MCF 10A (cell line): ENCODE measurements at regions of chr5 and their contacts with region 1.

Region 1: GRCh38 chr5:172697123-172698121 is 56.4 kb downstream of the NEURL1B start:
- DNase-seq: peak; percentile 94
- H3K4me3 Mint-ChIP-seq: peak overlapping the region; percentile 82
- H3K27ac Mint-ChIP-seq: peak overlapping the region; percentile 82
- H3K4me1 Mint-ChIP-seq: peaks cover 17% of the 10 kb centered on the region
- H3K27me3 Mint-ChIP-seq: peaks cover 14% of the 10 kb centered on the region
- CTCF ChIP-seq: peak; percentile 99

Region 2: DNA sequence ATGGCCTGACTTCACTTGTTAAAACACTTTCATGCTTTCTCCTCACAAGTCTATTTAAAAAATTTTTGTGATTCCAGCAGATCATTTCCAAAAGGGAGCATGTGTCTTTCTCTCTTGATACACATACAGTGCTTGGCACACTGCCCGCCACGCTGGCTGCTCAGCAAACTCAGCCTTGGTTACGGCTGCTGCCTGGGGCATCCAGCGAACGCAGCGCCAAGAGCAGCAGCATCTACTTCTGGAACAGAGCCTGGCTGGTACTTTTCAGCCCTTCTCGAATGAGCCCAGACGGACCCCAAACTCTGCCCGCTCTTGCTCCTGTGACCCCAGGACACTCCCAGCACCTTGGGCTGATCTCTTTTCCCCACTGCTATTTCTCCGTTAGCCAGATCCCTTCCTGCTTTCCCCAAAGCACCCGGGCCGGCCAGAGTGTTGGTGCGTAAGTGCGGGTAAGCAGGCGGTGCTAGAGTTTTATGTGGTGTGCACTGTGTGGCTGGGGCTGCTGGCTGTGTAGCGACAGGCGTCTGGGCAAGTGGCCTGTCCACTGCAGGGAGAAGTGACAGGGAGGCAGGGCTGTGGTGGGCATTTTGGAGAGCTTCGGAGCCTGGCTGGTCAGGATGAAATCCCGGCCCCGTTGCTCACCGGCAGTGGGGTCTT is 316.3 kb before region 1 on chr5:
- CTCF ChIA-PET with region 1: no interaction called
- POLR2A ChIA-PET with region 1: no interaction called
- intact Hi-C with region 1: no loop called
- DNase-seq: no peak
- H3K4me3 Mint-ChIP-seq: no peak overlapping the region
- H3K27ac Mint-ChIP-seq: no peak overlapping the region
- H3K4me1 Mint-ChIP-seq: peaks cover 16% of the 10 kb centered on the region
- H3K27me3 Mint-ChIP-seq: no peaks in the 10 kb centered on the region
- CTCF ChIP-seq: no peak

Region 3: DNA sequence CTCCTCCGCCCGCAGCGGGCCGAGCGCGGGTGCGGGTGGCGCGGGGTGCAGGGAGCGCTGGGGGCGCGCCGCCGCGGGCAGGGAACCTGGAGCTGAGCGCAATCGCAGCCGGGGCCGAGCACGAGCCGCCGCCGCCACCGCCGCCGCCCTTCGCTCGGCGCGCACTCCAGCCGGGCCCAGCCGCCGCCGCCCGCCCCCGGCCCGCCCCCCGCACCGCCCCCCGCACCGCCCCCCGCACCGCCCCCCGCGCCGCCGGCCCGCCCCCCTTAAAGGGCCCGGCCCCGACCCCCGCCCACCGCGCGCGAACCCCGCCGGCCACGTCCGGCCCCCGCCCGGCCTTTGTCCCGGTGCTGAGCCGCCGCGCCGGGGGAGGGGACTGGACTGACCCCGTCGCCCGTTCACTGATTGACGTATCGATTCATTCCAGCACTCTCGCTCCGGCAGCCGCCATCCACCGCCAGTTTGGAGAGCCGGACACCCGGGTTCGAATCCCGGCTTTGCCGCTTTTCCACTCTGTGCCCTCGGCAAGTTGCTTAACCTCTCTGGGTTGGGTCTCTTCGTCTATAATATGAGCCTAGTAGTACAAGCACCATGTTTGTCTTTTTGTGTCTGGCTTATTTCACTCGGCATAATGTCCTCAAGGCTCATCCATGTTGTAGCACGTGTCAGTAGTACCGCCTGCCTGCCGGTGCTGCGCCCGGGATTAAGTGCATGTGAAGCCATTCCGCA is 242.9 kb before region 1 on chr5 and contains the start of gene SH3PXD2B:
- CTCF ChIA-PET with region 1: interaction called, 52 read pairs
- POLR2A ChIA-PET with region 1: interaction called, 4 read pairs
- intact Hi-C with region 1: no loop called
- DNase-seq: peak; percentile 68
- H3K4me3 Mint-ChIP-seq: peak within 1 kb of the TSS; percentile 91
- H3K27ac Mint-ChIP-seq: peak within 1 kb of the TSS; percentile 90
- H3K4me1 Mint-ChIP-seq: peaks cover 44% of the 10 kb centered on the region
- H3K27me3 Mint-ChIP-seq: no peaks in the 10 kb centered on the region
- CTCF ChIP-seq: no peak
- total RNA-seq, gene SH3PXD2B: 34.1 and 42.3 TPM in 2 replicates

Region 4: GRCh38 chr5:172503925-172504700 is 193.3 kb before region 1 on chr5:
- CTCF ChIA-PET with region 1: interaction called, 17 read pairs
- POLR2A ChIA-PET with region 1: no interaction called
- intact Hi-C with region 1: no loop called
- DNase-seq: peak; percentile 53
- H3K4me3 Mint-ChIP-seq: peak overlapping the region; percentile 9
- H3K27ac Mint-ChIP-seq: peak overlapping the region; percentile 77
- H3K4me1 Mint-ChIP-seq: peaks cover 23% of the 10 kb centered on the region
- H3K27me3 Mint-ChIP-seq: no peaks in the 10 kb centered on the region
- CTCF ChIP-seq: no peak

Region 5: DNA sequence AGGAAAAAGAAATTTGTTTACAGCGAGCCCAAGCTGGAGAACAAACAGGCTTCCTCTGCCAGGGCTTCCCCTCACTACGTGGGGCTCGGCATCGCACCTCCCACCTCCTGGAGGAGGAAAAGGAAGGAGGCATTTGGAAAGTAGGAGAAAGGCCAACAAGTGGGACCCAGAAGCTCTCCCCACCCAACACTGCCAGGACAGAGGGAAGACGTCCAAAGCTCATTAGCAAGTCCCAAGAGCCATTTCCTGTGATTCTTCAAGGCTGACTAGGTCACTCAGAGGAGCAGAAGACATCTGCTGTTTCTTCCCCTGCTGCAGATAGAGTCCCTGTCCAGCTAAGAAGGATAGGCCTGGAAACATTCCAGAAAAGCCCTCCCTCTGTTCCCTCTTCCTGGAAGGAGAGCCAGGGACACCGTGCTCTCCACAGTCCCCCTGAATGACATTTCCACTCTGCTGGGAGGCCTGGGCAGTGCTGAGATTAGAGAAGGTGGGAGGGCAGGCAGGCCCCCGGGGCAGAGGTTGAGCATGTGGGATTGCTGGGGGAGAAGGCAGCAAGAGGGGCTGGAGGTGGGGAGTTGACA is 113.4 kb before region 1 on chr5:
- CTCF ChIA-PET with region 1: interaction called, 9 read pairs
- POLR2A ChIA-PET with region 1: no interaction called
- intact Hi-C with region 1: loop called (anchors 1 kb)
- DNase-seq: no peak
- H3K4me3 Mint-ChIP-seq: no peak overlapping the region
- H3K27ac Mint-ChIP-seq: no peak overlapping the region
- H3K4me1 Mint-ChIP-seq: no peaks in the 10 kb centered on the region
- H3K27me3 Mint-ChIP-seq: peaks cover 65% of the 10 kb centered on the region
- CTCF ChIP-seq: no peak

Region 6: DNA sequence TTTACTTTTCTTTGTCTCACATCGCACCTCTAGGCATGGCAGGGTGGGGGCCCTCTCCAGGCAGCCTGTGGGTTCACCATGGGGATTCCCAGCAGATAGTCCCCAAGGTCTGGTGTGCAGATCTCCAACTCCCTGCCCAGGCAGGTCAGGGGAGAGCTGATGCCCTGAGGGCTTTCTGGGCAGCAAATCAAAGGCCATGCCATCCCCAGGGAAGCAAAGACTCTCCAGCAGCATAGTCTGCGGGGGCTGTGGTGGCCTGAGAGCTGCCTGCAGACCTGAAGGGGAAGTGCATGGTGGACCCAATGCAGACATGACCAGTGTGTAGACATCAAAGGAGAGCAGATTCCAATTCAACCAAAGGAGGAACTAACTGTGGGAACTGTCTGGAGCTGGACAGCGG is 48.7 kb before region 1 on chr5:
- CTCF ChIA-PET with region 1: interaction called, 49 read pairs
- POLR2A ChIA-PET with region 1: no interaction called
- intact Hi-C with region 1: no loop called
- DNase-seq: no peak
- H3K4me3 Mint-ChIP-seq: no peak overlapping the region
- H3K27ac Mint-ChIP-seq: no peak overlapping the region
- H3K4me1 Mint-ChIP-seq: peaks cover 24% of the 10 kb centered on the region
- H3K27me3 Mint-ChIP-seq: no peaks in the 10 kb centered on the region
- CTCF ChIP-seq: no peak

Region 7: DNA sequence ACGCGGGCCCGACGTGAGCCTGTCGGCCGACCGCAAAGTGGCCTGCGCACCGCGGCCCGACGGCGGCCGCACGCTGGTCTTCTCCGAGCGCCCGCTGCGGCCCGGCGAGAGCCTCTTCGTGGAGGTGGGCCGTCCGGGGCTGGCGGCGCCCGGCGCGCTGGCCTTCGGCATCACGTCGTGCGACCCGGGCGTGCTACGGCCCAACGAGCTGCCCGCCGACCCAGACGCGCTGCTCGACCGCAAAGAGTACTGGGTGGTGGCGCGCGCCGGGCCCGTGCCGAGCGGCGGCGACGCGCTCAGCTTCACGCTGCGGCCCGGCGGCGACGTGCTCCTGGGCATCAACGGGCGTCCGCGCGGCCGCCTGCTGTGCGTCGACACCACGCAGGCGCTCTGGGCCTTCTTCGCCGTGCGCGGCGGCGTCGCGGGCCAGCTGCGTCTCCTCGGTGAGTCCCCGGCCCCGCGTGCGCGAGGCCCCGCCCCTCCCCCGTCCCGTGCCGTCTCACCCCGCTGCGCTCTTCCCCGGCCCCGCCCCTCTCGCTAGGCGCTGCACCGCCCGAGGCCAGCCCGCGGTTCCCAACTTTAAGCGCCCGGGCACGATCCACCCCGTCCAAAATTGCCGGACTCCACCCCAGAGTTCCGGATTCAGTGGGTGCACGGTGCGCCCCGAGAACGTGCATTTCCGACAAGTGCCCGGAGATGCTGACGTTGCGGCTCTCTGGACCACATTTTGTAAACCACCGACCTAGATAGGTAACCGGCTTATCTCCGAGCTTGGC is 13.5 kb before region 1 on chr5:
- CTCF ChIA-PET with region 1: interaction called, 23 read pairs
- POLR2A ChIA-PET with region 1: interaction called, 3 read pairs
- intact Hi-C with region 1: no loop called
- DNase-seq: no peak
- H3K4me3 Mint-ChIP-seq: no peak overlapping the region
- H3K27ac Mint-ChIP-seq: no peak overlapping the region
- H3K4me1 Mint-ChIP-seq: no peaks in the 10 kb centered on the region
- H3K27me3 Mint-ChIP-seq: no peaks in the 10 kb centered on the region
- CTCF ChIP-seq: no peak